AG04450 (cell line): ENCODE measurements at regions of chr11 and their contacts with region 1.

Region 1: DNA sequence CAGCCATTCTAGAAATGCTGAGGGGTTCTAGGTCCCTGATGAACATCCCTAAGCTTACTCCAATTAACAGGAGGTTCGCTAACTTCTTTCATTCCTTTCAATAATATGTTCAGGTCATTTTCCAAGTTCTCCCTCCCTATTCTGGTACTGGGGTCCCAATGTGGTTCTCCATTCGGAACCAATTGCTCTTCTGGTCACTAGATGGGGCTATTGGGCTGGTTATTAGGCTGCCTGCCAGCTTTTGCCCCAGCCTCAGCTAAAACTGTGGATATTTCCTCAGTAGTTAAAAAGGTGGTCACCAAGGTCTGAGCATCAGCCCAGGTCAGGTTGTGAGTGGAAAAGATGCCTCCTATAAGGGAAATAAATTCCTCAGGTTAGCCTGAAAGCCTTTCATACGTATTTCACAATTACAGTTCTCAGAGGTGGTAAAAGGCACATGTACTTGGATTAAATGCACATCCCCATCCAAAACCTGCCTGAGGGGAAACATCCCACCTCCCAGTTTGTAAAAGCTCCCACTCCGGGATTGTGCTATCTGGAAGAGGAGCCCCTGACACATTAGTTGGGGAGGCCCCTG is 161.1 kb upstream of the CCDC179 start:
- DNase-seq: peak; percentile 21
- H3K4me3 ChIP-seq: no peak overlapping the region
- H3K27ac ChIP-seq: no peak overlapping the region
- H3K27me3 ChIP-seq: no peaks in the 10 kb centered on the region
- CTCF ChIP-seq: peak; percentile 86

Region 2: GRCh38 chr11:22828373-22828772 is 193.0 kb before region 1 on chr11:
- CTCF ChIA-PET with region 1: no interaction called
- POLR2A ChIA-PET with region 1: no interaction called
- DNase-seq: no peak
- H3K4me3 ChIP-seq: no peak overlapping the region
- H3K27ac ChIP-seq: no peak overlapping the region
- H3K27me3 ChIP-seq: no peaks in the 10 kb centered on the region
- CTCF ChIP-seq: no peak

Region 3: DNA sequence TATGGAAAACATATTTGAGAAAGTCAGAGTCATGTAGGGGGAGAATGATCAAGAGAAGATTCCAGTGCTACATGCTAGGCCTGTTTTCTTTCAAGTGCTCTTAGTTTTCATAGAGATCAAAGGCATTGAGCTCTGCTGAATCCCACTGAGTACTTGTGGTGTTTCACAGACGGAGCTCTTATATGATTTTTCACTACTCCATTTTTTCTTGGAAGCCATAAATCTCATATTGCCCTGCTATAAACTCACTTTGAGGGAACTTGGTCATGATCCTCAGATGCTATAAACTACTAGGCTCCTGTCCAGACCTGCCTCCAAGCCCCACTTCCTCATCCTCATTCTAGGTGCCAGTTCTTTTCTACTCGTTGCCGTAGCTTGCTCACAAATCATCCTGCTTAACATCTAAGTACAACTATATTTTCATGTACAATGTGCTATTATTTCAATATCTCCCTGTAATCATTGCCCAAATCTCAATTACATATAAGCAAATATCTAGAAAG is 19.7 kb after region 1 on chr11:
- CTCF ChIA-PET with region 1: interaction called, 17 read pairs
- POLR2A ChIA-PET with region 1: no interaction called
- DNase-seq: no peak
- H3K4me3 ChIP-seq: no peak overlapping the region
- H3K27ac ChIP-seq: no peak overlapping the region
- H3K27me3 ChIP-seq: no peaks in the 10 kb centered on the region
- CTCF ChIP-seq: no peak

Region 4: GRCh38 chr11:23112987-23113886 is 91.9 kb after region 1 on chr11:
- CTCF ChIA-PET with region 1: interaction called, 12 read pairs
- POLR2A ChIA-PET with region 1: no interaction called
- DNase-seq: no peak
- H3K4me3 ChIP-seq: no peak overlapping the region
- H3K27ac ChIP-seq: no peak overlapping the region
- H3K27me3 ChIP-seq: no peaks in the 10 kb centered on the region
- CTCF ChIP-seq: peak; percentile 74